ENCODE measurements at regions of chr7 and their contacts with region 1.

Region 1: GRCh38 chr7:45105588-45106188 is 5.8 kb downstream of the TBRG4 start:
- DNase-seq: no peak
- ATAC-seq: no peak

Region 2: DNA sequence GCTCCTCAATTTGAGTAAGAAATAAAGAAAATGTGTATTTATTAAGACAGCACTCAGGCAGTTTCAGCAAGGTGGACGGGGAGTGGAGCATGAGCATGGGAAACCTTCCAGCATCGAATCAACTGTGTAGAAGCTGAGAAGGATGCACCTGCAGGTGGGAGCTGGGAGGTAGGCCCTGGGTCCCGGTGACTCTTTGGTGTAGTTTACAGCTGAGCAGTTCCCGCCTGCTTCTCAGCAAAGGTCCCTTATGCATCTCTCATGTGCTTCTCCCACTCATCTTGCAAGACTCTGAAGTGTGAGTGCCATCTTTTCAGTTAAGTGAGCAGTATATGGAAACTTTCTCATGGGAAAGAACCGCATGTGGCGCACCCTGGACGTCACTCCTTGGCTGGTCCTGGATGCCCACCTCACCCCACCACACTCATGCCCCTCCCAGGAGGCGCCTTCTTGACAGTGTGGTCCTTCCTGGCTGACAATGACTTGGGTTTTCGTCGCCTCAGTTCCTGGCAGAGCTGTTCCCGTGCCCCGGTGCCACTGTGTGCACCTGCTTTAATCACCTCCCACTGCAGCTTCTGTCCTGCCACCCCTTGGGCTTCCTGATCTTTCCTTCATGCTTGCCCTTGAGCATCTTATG is 200.6 kb before region 1 on chr7:
- intact Hi-C with region 1: no loop called
- DNase-seq: no peak
- ATAC-seq: no peak

Region 3: GRCh38 chr7:44999245-45000095 is 106.2 kb before region 1 on chr7:
- intact Hi-C with region 1: loop called (anchors 5 kb)
- DNase-seq: peak; percentile 99
- ATAC-seq: peak; percentile 97